Aorta (tissue), 5 donors: ENCODE measurements at regions of chr1 and their contacts with region 1.

Region 1: GRCh38 chr1:61481313-61481712 is 243.6 kb downstream of the TM2D1 start:
- DNase-seq: no peak
- ATAC-seq: no peak
- H3K4me3 ChIP-seq: no peak overlapping the region
- H3K27ac ChIP-seq: no peak overlapping the region
- H3K4me1 ChIP-seq: peaks cover 0 to 1% of the 10 kb centered on the region in 2 donors
- H3K27me3 ChIP-seq: no peaks in the 10 kb centered on the region

Region 2: DNA sequence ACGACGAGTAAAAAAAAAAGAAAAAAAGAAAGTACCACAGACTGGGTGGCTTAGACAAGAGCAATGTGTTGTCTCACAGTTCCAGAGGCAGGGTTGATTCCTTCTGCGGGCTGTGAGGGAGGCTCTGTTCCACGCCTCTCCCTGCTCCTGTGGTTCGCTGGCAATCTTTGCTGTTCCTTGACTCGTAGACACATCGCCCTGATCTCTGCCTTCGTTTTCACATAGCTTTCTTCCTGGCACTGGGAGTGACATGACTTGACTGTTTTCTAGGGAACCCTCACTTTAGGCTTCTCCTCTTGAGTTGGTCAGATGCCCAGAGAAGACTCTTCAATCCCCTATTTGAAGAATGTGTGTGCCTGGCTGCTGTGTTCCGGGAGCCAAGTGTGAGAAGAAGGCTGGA is 110.0 kb after region 1 on chr1:
- intact Hi-C with region 1: loop called in 1 of 2 experiments (anchors 10 kb)
- DNase-seq: peak in 1 of 2 donors; percentile 52
- ATAC-seq: peak; percentile 77
- H3K4me3 ChIP-seq: no peak overlapping the region
- H3K27ac ChIP-seq: no peak overlapping the region
- H3K4me1 ChIP-seq: no peaks in the 10 kb centered on the region
- H3K27me3 ChIP-seq: no peaks in the 10 kb centered on the region